ENCODE measurements at regions of chr14 and their contacts with region 1.

Region 1: GRCh38 chr14:101767618-101768362 is 6.3 kb downstream of the PPP2R5C start:
- DNase-seq: no peak
- ATAC-seq: no peak
- H3K4me3 ChIP-seq: no peak overlapping the region
- H3K27ac ChIP-seq: no peak overlapping the region
- H3K4me1 ChIP-seq: no peaks in the 10 kb centered on the region
- H3K27me3 ChIP-seq: no peaks in the 10 kb centered on the region; a peak in 1 of 4 replicates
- CTCF ChIP-seq: no peak
- EP300 ChIP-seq: no peak
- POLR2A ChIP-seq: no peak
- RAD21 ChIP-seq: no peak

Region 2: DNA sequence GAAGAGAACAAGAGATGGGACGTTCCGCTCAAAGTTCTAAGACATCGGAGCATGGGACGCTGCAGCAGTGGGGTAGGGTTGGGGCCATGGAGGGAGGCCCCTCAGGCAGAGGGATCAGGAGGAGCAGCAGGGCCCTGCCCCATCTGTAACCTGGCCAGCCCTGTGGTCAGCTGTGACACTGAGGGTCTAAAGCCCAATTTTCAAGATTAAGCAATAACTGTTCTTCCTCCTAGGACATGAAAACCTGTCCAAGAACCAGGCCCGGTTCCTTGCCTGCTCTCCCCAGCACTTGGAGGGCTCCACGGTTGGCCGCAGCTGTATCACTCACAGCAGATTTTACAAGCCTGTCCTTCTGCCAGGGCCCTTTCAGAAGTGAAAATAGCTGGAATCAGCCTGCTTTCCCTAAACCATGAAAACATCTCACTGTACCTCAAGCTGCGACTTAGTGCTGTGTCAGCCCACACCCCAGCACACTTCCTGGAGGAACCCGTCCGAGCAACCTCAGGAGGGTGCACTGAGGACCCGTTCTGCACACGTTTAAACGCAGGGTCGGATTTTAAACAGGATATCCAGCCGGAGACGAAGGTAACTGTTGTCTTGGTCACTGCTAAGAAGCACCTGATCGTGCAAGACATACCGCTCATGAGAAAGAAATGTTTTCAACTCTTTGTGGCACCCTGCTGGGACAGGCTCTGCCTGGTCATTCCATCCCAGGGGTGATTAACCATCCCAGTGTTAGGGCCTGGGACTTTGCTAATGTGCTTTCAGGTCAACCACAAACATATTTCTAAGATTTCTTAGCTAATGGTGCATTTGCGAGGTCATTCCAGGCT is 408.4 kb before region 1 on chr14:
- CTCF ChIA-PET with region 1: no interaction called
- POLR2A ChIA-PET with region 1: no interaction called
- RAD21 ChIA-PET with region 1: no interaction called
- SMC1A ChIA-PET with region 1: no interaction called
- in situ Hi-C with region 1: no loop called
- intact Hi-C with region 1: no loop called
- DNase-seq: no peak
- ATAC-seq: no peak
- H3K4me3 ChIP-seq: no peak overlapping the region
- H3K27ac ChIP-seq: no peak overlapping the region
- H3K4me1 ChIP-seq: no peaks in the 10 kb centered on the region
- H3K27me3 ChIP-seq: peaks cover 0 to 1% of the 10 kb centered on the region in 2 experiments; a peak in 2 of 4 replicates
- CTCF ChIP-seq: no peak
- EP300 ChIP-seq: no peak
- POLR2A ChIP-seq: no peak
- RAD21 ChIP-seq: no peak

Region 3: DNA sequence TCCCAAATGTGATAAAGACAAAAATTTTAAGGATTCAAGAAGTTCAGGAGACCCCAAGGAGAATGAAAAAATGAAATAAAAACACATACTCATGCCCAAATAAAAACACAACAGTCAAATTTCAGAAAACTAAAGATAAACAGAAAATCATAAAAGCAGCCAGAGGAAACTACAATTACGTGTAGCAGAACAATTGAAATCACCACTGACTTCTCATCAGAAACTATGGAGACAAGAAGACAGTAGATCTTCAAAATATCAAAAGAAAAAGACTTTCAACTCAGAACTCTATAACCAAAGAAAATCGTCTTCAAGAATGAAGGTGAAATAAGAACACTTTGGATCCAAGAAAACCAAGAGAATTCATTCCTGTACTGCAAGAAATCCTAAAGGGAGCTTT is 151.6 kb before region 1 on chr14:
- CTCF ChIA-PET with region 1: no interaction called
- POLR2A ChIA-PET with region 1: no interaction called
- RAD21 ChIA-PET with region 1: no interaction called
- SMC1A ChIA-PET with region 1: no interaction called
- in situ Hi-C with region 1: no loop called
- intact Hi-C with region 1: no loop called
- DNase-seq: no peak
- ATAC-seq: no peak
- H3K4me3 ChIP-seq: no peak overlapping the region
- H3K27ac ChIP-seq: no peak overlapping the region
- H3K4me1 ChIP-seq: no peaks in the 10 kb centered on the region
- H3K27me3 ChIP-seq: no peaks in the 10 kb centered on the region
- CTCF ChIP-seq: no peak
- EP300 ChIP-seq: no peak
- POLR2A ChIP-seq: no peak
- RAD21 ChIP-seq: no peak

Region 4: GRCh38 chr14:101628471-101628966 is 139.3 kb before region 1 on chr14:
- CTCF ChIA-PET with region 1: no interaction called
- POLR2A ChIA-PET with region 1: no interaction called
- RAD21 ChIA-PET with region 1: no interaction called
- SMC1A ChIA-PET with region 1: no interaction called
- in situ Hi-C with region 1: no loop called
- intact Hi-C with region 1: no loop called
- DNase-seq: no peak
- ATAC-seq: peak; percentile 96
- H3K4me3 ChIP-seq: no peak overlapping the region
- H3K27ac ChIP-seq: no peak overlapping the region
- H3K4me1 ChIP-seq: no peaks in the 10 kb centered on the region
- H3K27me3 ChIP-seq: no peaks in the 10 kb centered on the region; a peak in 2 of 4 replicates
- CTCF ChIP-seq: peak; percentile 90 to 95 (median 90)
- EP300 ChIP-seq: no peak
- POLR2A ChIP-seq: no peak
- RAD21 ChIP-seq: peak; percentile 76

Region 5: DNA sequence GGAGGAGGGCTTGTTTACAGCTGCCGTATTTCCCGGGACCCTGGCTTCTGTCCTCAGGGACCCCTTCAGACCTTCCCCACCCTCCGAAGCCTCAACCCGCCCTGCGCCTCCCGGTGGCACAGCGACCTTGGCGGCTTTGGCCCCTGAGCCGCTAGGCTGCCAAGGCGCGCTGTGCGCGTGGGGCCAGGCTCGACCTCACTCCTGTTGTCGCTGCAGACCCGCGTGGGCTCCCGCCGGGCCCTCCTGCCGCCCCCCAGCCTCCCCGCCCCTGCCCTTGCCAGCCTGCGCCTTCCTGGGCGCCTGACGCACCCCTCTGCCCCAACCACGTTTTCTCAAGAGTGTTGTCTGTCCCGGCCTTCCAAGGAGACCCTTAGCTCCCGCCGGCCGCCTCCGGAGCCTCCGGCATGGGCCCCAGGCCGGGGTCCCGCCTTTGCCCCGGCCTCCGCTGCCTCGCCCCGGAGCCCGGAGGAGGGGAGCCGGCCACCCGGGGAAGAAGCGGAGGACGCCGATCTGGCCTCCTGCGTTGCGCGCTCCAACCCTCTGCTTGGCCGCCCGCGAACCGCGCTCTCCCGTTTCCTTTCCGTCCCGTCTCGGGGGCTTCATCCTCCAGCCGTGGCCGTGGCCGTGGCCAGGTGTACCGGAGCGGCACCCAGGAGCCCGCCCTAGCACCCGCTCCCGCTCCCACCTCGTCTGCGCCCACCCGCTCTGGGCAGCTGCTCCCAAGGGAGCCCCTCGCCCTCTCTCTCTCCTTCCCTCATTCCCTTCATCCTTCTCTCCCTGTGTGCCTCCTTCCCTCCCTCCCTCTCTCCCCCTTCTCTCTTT is 13.7 kb after region 1 on chr14:
- CTCF ChIA-PET with region 1: interaction called, 11 read pairs
- POLR2A ChIA-PET with region 1: no interaction called
- RAD21 ChIA-PET with region 1: no interaction called
- SMC1A ChIA-PET with region 1: interaction called, 5 read pairs
- in situ Hi-C with region 1: no loop called
- intact Hi-C with region 1: no loop called
- DNase-seq: no peak
- ATAC-seq: peak; percentile 69
- H3K4me3 ChIP-seq: peak overlapping the region; percentile 50; the same call in 1 of the 2 replicates
- H3K27ac ChIP-seq: no peak overlapping the region
- H3K4me1 ChIP-seq: peaks cover 6% of the 10 kb centered on the region
- H3K27me3 ChIP-seq: peaks cover 4% of the 10 kb centered on the region in 2 experiments; a peak in 2 of 4 replicates
- CTCF ChIP-seq: no peak
- EP300 ChIP-seq: no peak
- POLR2A ChIP-seq: no peak
- RAD21 ChIP-seq: no peak

Region 6: DNA sequence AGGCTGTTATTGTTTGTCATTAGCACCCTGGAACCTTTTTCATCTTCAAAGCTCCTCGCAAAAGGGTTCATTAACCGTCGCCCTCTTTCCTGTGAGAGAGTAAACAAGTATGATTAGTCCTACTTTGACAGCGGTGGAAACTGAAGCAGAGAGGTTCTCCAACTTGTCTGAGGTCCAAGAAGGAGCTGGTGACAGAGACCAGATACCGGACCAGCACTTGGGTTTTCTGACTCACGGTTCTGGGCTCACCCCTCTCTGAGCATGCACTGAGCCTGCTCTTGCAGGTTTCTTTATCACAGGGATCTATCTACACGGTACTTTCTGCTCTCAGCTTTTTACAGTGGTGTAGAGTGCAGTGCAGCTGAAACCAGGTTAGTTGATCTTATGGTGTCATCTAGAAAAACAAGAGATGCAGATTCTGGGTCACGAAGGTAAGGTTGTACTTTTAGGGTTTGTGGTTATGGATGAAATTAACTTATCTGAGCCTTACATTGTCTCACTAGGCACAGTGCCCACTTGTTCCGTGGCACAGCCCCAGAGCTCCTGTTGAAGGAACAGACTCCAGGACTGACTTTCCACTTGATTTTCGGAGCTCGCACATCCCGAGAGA is 55.8 kb after region 1 on chr14:
- CTCF ChIA-PET with region 1: interaction called, 16 read pairs
- POLR2A ChIA-PET with region 1: interaction called, 4 read pairs
- RAD21 ChIA-PET with region 1: interaction called, 13 read pairs
- SMC1A ChIA-PET with region 1: interaction called, 13 read pairs
- in situ Hi-C with region 1: no loop called
- intact Hi-C with region 1: no loop called
- DNase-seq: peak; percentile 68
- ATAC-seq: peak; percentile 77
- H3K4me3 ChIP-seq: peak overlapping the region; percentile 67
- H3K27ac ChIP-seq: peak overlapping the region; percentile 99
- H3K4me1 ChIP-seq: peaks cover 63% of the 10 kb centered on the region
- H3K27me3 ChIP-seq: no peaks in the 10 kb centered on the region
- CTCF ChIP-seq: no peak
- EP300 ChIP-seq: 0 out of 4 replicates have a peak, but pooled peaks of 1 of the 2 experiments have one; percentile 32
- POLR2A ChIP-seq: no peak; the same call in 1 of the 2 replicates
- RAD21 ChIP-seq: no peak

Region 7: DNA sequence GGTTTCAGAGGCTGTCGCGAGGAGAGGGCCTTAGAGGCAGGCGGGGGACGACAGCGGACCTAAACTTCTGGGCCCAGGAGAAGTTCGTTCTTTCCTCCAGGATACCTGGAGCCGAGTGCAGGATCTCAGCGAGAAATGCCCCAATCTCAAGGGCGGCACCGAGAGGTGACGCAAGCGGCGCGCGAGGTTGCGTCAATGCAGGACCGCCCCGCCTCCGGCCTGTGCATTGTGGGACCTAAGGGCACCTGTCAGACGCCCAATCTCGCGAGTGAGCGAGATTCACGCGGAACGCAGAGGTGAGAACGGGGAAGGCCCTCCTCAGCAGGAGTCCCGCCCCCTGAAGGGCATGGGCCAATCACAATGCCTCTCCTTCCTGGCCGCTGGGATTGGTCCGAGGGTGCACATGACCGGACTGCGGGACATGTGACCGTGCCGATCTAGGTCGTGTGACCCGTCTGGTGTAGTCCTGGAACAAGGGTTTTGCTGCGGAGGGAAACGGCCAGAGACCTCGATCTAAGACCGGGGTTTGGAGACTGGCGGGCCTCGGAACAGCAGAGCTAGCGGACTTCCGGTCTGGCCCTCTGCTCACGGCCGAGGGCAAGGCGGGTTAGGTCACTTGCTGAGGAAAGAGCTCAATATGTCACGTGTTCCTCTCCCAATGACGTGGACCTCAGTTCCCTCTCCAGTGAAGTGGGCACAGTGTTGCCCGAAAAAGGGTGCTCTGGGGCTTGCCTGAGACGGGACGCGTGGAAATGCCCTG is 180.3 kb after region 1 on chr14:
- CTCF ChIA-PET with region 1: interaction called, 80 read pairs
- POLR2A ChIA-PET with region 1: no interaction called
- RAD21 ChIA-PET with region 1: interaction called, 11 read pairs
- SMC1A ChIA-PET with region 1: interaction called, 16 read pairs
- in situ Hi-C with region 1: no loop called
- intact Hi-C with region 1: no loop called
- DNase-seq: peak; percentile 100
- ATAC-seq: peak; percentile 99
- H3K4me3 ChIP-seq: peak overlapping the region; percentile 99
- H3K27ac ChIP-seq: peak overlapping the region; percentile 83
- H3K4me1 ChIP-seq: peaks cover 2% of the 10 kb centered on the region; the same call in 1 of the 2 replicates
- H3K27me3 ChIP-seq: no peaks in the 10 kb centered on the region
- CTCF ChIP-seq: no peak; a peak in 1 of 6 replicates
- EP300 ChIP-seq: 0 out of 4 replicates have a peak, but pooled peaks of 1 of the 2 experiments have one; percentile 32
- POLR2A ChIP-seq: peak; percentile 91
- RAD21 ChIP-seq: no peak

Region 8: DNA sequence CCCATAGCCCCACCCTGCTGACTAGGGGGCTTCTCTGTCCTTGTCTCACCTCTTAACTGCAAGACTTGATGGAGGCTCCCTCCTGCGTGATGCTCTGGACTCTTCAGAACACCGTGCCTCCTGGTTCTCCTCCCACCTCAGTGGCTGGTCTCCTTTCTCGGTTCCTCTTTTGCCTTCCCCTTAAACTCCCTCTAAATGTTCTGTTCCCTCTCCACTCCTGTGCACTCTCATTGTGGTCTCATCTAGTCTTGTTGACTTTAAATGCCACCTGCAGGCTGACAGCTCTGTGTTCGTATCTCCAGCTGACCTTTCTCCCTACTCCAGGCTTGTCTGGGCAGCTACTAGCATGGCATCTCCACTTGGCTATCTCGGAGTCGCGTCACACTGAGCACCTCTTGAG is 224.9 kb after region 1 on chr14:
- CTCF ChIA-PET with region 1: interaction called, 14 read pairs
- POLR2A ChIA-PET with region 1: no interaction called
- RAD21 ChIA-PET with region 1: interaction called, 4 read pairs
- SMC1A ChIA-PET with region 1: interaction called, 8 read pairs
- in situ Hi-C with region 1: no loop called
- intact Hi-C with region 1: no loop called
- DNase-seq: peak; percentile 84
- ATAC-seq: peak; percentile 97
- H3K4me3 ChIP-seq: peak overlapping the region; percentile 37; the same call in 1 of the 2 replicates
- H3K27ac ChIP-seq: peak overlapping the region; percentile 29; the same call in 1 of the 2 replicates
- H3K4me1 ChIP-seq: peaks cover 29% of the 10 kb centered on the region
- H3K27me3 ChIP-seq: no peaks in the 10 kb centered on the region
- CTCF ChIP-seq: peak; percentile 24 to 61 (median 38); a peak in 4 of 6 replicates
- EP300 ChIP-seq: peak; percentile 43 to 86; a peak in 3 of 4 replicates
- POLR2A ChIP-seq: peak; percentile 44; the same call in 1 of the 2 replicates
- RAD21 ChIP-seq: peak; percentile 63

Measured in GM12878 (cell line).